ENCODE measurements at regions of chr6 and their contacts with region 1.

Region 1: DNA sequence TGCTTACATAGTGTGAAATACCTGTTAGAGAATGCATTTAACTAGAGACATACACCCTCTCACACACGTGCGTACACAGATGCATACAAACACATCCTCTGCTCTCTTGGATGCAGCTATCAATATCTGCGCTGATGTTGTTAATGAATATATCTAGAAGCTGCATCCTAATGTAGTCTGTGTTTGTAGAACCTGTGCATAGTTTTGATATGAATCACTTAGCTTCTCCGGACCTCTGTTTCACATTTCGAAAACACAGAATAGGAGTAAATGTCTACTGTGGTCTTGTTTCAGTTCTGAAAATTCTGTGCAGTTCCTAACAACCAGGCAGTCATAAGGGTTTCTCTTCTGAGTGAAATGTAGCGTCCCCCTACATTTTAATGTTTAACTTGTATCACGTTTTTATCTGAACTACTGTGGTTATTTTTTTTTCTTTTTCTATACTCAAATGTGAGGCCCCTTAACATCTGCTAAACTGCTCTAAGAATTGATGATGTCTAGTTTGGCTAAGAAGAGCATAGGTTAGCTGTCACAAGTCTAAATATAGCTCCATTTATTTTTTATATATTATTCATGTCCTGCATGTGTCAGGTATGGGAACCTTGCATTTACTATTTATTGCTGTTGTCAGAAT is 254.5 kb downstream of the TMEM242 start:
- DNase-seq: no peak
- ATAC-seq: peak; percentile 94
- H3K4me3 Mint-ChIP-seq: no peak overlapping the region
- H3K27ac Mint-ChIP-seq: peak overlapping the region; percentile 70
- H3K4me1 Mint-ChIP-seq: peaks cover 42% of the 10 kb centered on the region
- H3K27me3 Mint-ChIP-seq: no peaks in the 10 kb centered on the region

Region 2: GRCh38 chr6:157054531-157054979 is 14.3 kb before region 1 on chr6:
- CTCF ChIA-PET with region 1: interaction called, 17 read pairs
- POLR2A ChIA-PET with region 1: interaction called, 6 read pairs
- intact Hi-C with region 1: loop called in 1 of 2 experiments (anchors 2 kb)
- DNase-seq: peak; percentile 49
- ATAC-seq: peak; percentile 80
- H3K4me3 Mint-ChIP-seq: peak overlapping the region; percentile 15
- H3K27ac Mint-ChIP-seq: peak overlapping the region; percentile 89
- H3K4me1 Mint-ChIP-seq: peaks cover 41% of the 10 kb centered on the region
- H3K27me3 Mint-ChIP-seq: no peaks in the 10 kb centered on the region

Measured in activated CD4-positive, alpha-beta T cell treated with anti-CD3 and anti-CD28 coated beads for 36 hours (primary cell).